ENCODE measurements at regions of chr5 and their contacts with region 1.

Region 1: GRCh38 chr5:31531888-31532710 is at the starts of genes C5orf22 and DROSHA:
- DNase-seq: peak; percentile 95
- ATAC-seq: peak; percentile 99
- H3K4me3 ChIP-seq: peak within 1 kb of the TSS; percentile 92
- H3K27ac ChIP-seq: peak within 1 kb of the TSS; percentile 95
- H3K4me1 ChIP-seq: peaks cover 4% of the 10 kb centered on the region
- H3K27me3 ChIP-seq: no peaks in the 10 kb centered on the region
- CTCF ChIP-seq: no peak
- POLR2A ChIP-seq: no peak
- RAD21 ChIP-seq: no peak
- total RNA-seq, gene C5orf22: 19.9 and 23.3 TPM in 2 replicates
- total RNA-seq, gene DROSHA: 36.4 and 41.4 TPM in 2 replicates

Region 2: GRCh38 chr5:31786090-31786631 is 254.1 kb after region 1 on chr5:
- CTCF ChIA-PET with region 1: no interaction called
- POLR2A ChIA-PET with region 1: interaction called, 10 read pairs
- dilution Hi-C with region 1: no loop called
- in situ Hi-C with region 1: no loop called
- intact Hi-C with region 1: no loop called
- DNase-seq: no peak
- ATAC-seq: no peak
- H3K4me3 ChIP-seq: no peak overlapping the region
- H3K27ac ChIP-seq: no peak overlapping the region
- H3K4me1 ChIP-seq: no peaks in the 10 kb centered on the region
- H3K27me3 ChIP-seq: peaks cover 19% of the 10 kb centered on the region
- CTCF ChIP-seq: no peak
- POLR2A ChIP-seq: no peak
- RAD21 ChIP-seq: no peak

Region 3: GRCh38 chr5:32092938-32093812 is 561.1 kb after region 1 on chr5:
- CTCF ChIA-PET with region 1: no interaction called
- POLR2A ChIA-PET with region 1: no interaction called
- dilution Hi-C with region 1: no loop called
- in situ Hi-C with region 1: no loop called
- intact Hi-C with region 1: loop called (anchors 1 kb)
- DNase-seq: peak; percentile 78
- ATAC-seq: peak; percentile 91
- H3K4me3 ChIP-seq: no peak overlapping the region
- H3K27ac ChIP-seq: no peak overlapping the region
- H3K4me1 ChIP-seq: no peaks in the 10 kb centered on the region
- H3K27me3 ChIP-seq: no peaks in the 10 kb centered on the region
- CTCF ChIP-seq: peak; percentile 68
- POLR2A ChIP-seq: no peak
- RAD21 ChIP-seq: peak; percentile 81

Measured in IMR-90 (cell line).